ENCODE measurements at regions of chr6 and their contacts with region 1.

Region 1: DNA sequence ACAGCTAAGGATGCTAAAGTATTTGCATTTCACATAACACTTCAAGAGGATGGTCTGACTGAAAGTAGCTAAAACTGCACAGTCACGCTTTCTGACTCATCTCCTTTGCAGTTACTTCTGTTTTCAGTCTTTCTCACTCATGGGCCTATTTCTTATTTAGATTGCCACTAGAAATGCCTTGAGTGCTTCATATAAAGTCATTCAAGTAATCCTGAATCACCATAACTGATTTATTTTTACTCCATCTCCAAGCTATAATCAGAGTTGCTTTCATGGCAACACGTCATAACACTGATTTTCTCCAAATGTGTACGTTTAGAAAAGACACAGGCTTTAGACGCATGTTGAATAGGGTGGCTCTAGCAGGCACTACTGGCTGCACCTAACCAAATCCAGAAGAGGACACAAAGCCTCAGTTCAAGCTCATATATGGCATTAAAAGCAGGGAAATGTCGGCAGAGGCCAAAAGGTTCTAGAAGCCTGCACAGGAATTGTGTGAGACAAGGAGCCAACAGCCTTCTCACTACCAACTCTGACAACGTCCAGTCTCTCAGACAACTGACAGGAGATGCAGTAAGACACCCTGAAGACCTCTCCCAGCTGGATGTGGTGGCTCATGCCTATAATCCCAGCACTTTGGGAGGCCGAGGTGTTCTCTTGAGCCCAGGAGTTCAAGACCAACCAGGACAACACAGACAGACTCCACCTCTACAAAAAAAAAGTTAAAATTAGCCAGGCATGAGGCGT is 64.1 kb upstream of the BEND6 start:
- H3K4me3 ChIP-seq: no peak overlapping the region
- H3K27ac ChIP-seq: no peak overlapping the region
- H3K4me1 ChIP-seq: no peaks in the 10 kb centered on the region
- CTCF ChIP-seq: no peak

Region 2: DNA sequence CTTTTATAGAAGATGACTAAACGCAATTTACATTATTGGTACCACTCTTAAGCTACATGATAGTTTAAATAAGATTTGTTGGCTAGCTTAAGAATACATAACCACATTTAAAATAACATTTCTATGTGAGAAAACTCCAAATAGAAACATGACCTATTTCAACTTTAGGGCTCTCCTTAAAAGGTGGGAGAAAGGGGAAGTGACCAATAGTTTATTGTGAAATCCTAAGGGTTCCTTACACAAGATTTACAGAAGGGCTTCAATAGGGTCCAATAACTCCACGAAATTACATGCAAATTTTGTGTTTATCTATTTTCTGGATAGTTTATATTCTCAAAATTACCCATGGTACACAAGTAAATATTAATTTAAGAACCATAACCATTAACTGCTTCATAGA is 156.5 kb before region 1 on chr6:
- CTCF ChIA-PET with region 1: no interaction called
- POLR2A ChIA-PET with region 1: no interaction called
- H3K4me3 ChIP-seq: no peak overlapping the region
- H3K27ac ChIP-seq: no peak overlapping the region
- H3K4me1 ChIP-seq: peaks cover 32% of the 10 kb centered on the region
- CTCF ChIP-seq: no peak

Region 3: DNA sequence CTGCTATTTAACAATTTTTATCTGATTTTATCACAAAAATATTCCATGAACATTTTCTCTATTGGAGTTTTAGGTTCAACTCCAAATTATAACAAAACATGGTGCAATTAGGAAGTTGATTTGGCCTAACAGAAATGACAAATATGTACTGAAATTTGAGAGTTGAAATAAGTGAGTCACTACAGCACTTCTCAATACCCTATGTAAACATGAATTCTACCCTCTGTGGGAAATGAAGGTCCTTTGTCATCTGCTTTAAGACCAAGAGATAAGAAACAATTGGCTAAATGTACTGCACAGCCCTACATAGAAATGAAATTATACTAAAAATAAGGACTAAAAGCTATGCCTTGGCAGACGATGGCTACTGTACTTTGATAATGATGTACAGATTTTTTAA is 22.2 kb before region 1 on chr6:
- CTCF ChIA-PET with region 1: interaction called, 3 read pairs
- POLR2A ChIA-PET with region 1: interaction called, 12 read pairs
- H3K4me3 ChIP-seq: no peak overlapping the region
- H3K27ac ChIP-seq: peak overlapping the region; percentile 34; the same call in 1 of the 2 replicates
- H3K4me1 ChIP-seq: peaks cover 39% of the 10 kb centered on the region
- CTCF ChIP-seq: no peak